ENCODE measurements at regions of chr12 and their contacts with region 1.

Region 1: DNA sequence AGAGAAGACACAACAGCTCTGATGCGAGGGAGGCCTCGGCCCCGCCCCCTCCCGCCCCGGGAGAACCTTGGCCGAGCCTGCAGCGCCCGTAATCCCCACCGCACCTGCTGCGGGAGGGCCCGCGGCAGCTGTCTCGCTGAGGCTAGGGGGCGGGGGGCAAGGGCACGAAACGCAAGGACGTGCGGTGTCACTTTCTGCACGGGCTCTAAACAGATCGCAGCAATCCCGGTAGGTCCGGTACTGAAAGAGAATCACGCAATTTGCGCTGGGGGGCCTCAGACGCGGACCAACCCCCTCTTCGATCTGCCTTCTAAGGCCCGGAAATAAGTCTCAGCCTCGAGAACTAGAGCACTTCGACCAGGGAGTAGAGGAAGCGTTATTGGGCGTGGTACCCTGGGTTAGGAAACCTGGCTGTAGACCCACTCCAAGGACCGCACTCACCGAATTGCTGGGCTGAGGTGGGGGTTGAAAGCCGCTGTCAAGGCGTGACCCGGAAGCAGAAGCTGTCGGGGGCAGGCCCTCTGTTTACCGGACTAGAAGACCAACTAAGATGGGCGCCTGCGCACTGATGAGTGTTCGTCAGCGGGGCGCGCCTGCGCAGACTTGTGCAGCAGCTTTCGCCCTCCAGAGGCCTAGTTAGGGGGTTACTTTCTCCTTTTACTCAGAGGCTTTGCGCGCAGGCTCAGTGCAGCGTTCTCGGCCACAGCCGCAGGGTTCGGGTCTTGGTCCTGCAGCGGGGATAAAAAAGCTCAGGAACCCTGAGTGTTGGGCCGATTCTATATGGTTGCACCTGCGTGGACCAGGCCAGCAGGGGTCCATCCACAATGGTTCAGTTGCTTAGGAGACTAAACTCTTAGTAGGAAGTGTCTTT is at the start of gene ASB8:
- DNase-seq: peak; percentile 99 to 100
- ATAC-seq: peak; percentile 99
- H3K4me3 ChIP-seq: peak within 1 kb of the TSS; percentile 77 to 93
- H3K27ac ChIP-seq: peak within 1 kb of the TSS in 1 of 2 donors; percentile 76
- H3K4me1 ChIP-seq: no peaks in the 10 kb centered on the region
- H3K27me3 ChIP-seq: no peaks in the 10 kb centered on the region
- total RNA-seq, gene ASB8: 32.8 to 34.2 TPM

Region 2: GRCh38 chr12:48061948-48062719 is 95.1 kb before region 1 on chr12:
- intact Hi-C with region 1: no loop called
- DNase-seq: no peak
- ATAC-seq: no peak
- H3K4me3 ChIP-seq: no peak overlapping the region
- H3K27ac ChIP-seq: no peak overlapping the region
- H3K4me1 ChIP-seq: no peaks in the 10 kb centered on the region
- H3K27me3 ChIP-seq: no peaks in the 10 kb centered on the region

Region 3: DNA sequence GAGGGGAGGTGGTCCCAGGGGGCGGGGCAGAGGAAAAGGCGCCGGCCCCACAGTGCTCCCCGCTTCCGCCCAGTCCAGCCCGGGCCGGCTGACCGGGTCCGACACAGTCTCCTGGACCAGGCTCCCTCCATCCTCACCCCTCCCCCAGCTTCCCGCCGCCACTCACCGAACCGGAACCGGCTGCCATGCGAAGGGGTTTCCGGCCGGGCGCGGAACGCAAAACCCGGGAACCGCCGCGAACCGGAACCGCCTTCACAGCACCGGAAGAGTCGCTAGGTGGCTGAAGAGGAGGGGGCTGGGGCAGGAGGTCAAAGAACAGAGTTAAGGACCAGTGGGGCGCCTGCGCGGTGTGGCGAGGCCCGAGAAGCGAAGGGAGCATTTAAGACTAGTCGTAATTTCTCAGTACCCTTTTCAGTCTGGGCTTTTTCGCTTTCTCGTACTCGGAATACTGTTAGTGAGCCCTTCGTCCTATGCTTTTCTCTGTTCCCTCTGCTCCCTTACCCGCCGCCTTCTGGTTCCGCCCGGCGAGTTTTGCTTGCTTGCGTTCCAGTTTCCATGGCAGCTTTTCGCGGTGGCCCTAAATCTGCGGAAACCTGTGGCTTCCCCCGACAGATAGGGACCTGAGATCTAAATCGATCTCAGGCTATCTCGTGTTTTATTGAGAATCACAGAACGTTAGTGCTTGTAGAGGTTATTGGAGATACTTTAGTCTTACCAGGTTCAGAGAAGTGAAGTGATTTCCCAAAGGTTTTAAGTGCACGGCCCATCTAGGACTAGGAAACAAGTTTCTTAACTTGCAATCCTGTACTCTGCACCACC is 51.2 kb before region 1 on chr12 and contains the start of gene SENP1:
- intact Hi-C with region 1: loop called in 1 of 2 experiments (anchors 5 kb)
- DNase-seq: peak; percentile 92 to 97
- ATAC-seq: peak; percentile 97
- H3K4me3 ChIP-seq: peak within 1 kb of the TSS; percentile 54 to 65
- H3K27ac ChIP-seq: peak within 1 kb of the TSS; percentile 85 to 93
- H3K4me1 ChIP-seq: peaks cover 2 to 4% of the 10 kb centered on the region in 2 donors
- H3K27me3 ChIP-seq: no peaks in the 10 kb centered on the region
- total RNA-seq, gene SENP1: 20.6 to 23.0 TPM

Region 4: DNA sequence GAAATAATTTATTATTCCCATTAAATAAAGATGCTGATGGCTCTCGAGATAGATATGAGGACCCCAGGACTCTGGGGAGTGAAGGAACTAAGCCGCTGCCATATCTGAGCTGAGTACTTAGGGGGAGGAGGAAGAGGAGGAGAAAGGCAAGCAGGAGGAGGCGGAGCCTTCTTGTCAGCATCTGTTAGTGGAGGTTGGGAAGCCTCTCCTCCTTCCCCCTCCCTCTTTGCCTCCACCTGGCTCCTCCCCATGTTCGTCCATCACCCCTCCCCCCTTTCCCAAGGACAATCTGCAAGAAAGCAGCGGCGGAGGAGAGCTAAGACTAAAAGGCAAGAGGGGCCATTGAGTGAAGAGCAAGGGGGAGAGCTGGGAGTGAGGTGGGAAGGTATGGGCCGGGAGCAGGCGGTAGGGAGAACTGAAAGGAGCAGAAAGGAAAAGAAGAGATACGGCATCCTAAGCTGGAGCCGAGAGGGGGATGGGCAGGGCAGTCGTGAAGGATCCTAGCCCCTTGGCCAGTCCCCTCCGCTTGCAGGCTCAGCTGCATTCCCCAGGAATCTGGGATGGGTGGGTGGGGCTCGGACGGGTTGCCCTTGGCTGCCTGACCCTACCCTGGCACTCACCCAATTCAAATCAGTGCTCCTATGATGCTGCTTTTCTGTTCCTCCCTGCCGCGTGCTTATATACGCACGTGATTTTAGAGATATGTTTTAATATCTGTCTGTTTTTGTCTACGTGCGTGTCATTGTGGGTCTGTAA is 38.0 kb before region 1 on chr12 and contains the start of gene PFKM:
- intact Hi-C with region 1: loop called in 1 of 2 experiments (anchors 5 kb)
- DNase-seq: peak; percentile 86 to 89
- ATAC-seq: peak; percentile 96
- H3K4me3 ChIP-seq: peak within 1 kb of the TSS; percentile 96 to 97
- H3K27ac ChIP-seq: peak within 1 kb of the TSS in 1 of 2 donors; percentile 44
- H3K4me1 ChIP-seq: peaks cover 0 to 1% of the 10 kb centered on the region in 2 donors
- H3K27me3 ChIP-seq: no peaks in the 10 kb centered on the region
- total RNA-seq, gene PFKM: 52.2 to 68.8 TPM